Brain microvascular endothelial cell (primary cell): ENCODE measurements at regions of chr15 and their contacts with region 1.

Region 1: GRCh38 chr15:74768771-74769342 is 13.0 kb upstream of the CSK start:
- DNase-seq: peak; percentile 40
- H3K4me3 ChIP-seq: no peak overlapping the region
- H3K27ac ChIP-seq: no peak overlapping the region
- H3K27me3 ChIP-seq: no peaks in the 10 kb centered on the region
- CTCF ChIP-seq: peak; percentile 85

Region 2: DNA sequence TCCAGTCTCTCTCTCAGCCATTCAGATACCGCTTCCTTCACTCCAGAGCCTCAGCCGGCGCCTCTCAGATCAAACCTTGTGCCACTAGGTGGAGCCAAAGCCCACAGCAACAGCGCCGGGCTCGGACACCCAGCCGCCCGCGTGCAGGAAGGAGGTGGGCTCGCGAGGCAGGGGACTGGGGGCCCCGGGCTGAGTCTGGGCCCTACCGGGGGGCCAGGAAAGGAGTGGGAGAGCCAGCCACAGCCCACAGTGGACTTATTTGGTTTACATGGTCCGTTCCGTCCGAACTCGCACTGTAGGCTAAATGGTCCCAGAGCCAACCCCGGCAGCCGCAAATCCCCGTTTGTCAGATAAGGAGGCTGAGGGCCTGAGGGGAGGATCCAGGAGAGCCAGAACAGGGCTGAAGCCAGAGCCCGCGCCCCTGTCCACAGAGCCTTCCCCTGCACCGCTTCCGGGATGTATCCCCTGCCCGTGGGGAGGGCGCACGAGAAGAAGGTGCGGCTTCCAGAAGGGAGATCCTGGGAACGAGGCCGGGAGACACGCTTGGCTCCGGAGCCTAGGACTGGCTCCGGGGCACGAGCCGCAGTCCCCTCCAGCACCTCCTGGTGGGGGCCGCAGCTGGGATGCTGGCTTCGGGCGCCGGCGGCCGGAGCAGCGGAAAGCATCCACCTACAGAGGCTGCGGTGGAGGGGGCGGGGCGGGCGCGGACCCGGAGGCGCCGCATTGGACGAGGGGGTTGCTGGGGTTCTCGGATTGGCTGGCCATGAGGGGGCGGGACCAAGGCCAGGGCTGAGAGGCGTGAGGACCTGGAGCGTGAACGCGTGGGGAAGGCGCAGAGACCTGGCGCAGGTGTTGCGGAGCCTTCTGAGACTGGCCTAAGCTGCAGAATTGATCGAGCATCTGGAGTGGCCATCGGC is 394.9 kb before region 1 on chr15:
- in situ Hi-C with region 1: loop called (anchors 25 kb)
- DNase-seq: peak; percentile 83
- H3K4me3 ChIP-seq: peak overlapping the region; percentile 65
- H3K27ac ChIP-seq: no peak overlapping the region
- H3K27me3 ChIP-seq: no peaks in the 10 kb centered on the region
- CTCF ChIP-seq: peak; percentile 89

Region 3: GRCh38 chr15:74631408-74632247 is 137.2 kb before region 1 on chr15:
- in situ Hi-C with region 1: loop called (anchors 5 kb)
- DNase-seq: peak; percentile 41
- H3K4me3 ChIP-seq: no peak overlapping the region
- H3K27ac ChIP-seq: no peak overlapping the region
- H3K27me3 ChIP-seq: no peaks in the 10 kb centered on the region
- CTCF ChIP-seq: peak; percentile 97

Region 4: DNA sequence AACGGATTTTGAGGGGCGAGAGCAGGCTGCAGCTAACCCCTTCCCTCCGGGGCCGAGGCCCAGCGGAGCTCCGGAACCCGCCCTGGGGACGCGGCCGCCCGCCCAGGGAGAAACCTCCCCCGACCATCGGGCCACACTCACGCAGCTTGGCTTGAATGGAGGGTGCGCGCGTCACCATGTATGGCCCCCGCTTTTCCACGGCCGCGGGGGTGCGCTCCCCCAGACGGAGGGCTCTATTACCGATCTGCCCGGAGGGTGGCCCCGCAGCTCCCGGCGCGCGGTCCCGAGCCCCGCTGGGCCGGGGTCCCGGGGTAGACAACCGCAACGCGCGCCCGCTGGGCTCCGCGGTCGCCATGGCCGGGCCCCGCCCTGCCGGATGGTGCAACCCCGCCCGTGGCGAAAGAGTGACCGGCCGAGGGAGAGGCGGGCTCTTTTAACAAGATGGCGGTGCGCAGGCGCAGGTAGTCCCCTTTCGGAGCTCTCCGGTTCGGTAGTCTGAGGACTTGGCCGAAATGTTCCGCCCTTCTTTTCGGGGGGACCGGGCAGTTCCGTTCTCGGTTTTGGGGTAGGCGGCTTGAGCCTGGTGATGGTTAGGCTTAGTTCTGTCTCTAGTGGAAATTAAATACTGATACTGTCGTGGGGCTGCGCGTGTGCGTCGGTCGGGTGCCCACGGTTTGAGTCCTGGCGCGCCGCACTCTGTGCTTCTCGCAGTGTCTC is 137.7 kb after region 1 on chr15 and contains the start of gene FAM219B:
- in situ Hi-C with region 1: no loop called
- DNase-seq: peak; percentile 77
- H3K4me3 ChIP-seq: peak within 1 kb of the TSS; percentile 82
- H3K27ac ChIP-seq: peak within 1 kb of the TSS; percentile 74
- H3K27me3 ChIP-seq: no peaks in the 10 kb centered on the region
- CTCF ChIP-seq: no peak

Region 5: DNA sequence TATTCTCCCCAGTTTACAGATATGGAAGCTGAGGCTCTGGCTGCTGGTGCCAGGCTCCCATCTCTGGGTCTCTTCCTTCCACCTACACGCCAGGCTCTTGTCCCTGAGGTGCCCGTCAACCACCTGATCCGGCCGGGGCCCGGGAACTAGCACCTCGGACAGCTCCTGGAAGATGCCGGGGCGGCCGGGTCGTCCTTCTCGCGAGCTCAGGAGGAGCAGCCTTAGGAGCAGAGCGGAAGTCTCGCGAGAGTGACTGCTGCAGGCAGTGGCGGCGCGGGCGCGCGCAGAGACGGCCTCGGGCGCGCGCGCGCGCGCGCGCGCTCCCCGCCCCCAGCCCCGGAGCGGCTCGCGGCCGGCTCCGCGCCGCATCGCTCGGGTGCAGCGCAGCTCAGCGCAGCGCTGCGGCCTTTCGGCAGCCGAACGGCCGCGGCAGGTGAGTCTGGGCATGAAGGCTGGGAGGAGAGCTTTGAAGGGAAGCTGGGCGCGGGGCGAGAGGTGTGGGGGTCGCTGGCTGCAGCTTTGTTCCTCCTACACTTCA is 226.5 kb after region 1 on chr15 and contains the start of gene SCAMP5:
- in situ Hi-C with region 1: no loop called
- DNase-seq: peak; percentile 89
- H3K4me3 ChIP-seq: peak within 1 kb of the TSS; percentile 75
- H3K27ac ChIP-seq: no peak within 1 kb of the TSS
- H3K27me3 ChIP-seq: peaks cover 13% of the 10 kb centered on the region
- CTCF ChIP-seq: no peak